PC-3 (cell line): ENCODE measurements at regions of chr13 and their contacts with region 1.

Region 1: GRCh38 chr13:24148399-24149305 is 11.9 kb upstream of the SPATA13 start:
- DNase-seq: peak; percentile 98
- ATAC-seq: peak; percentile 94
- H3K4me3 ChIP-seq: peak overlapping the region; percentile 28; the same call in 1 of the 2 replicates
- H3K27ac ChIP-seq: peak overlapping the region; percentile 99
- H3K4me1 ChIP-seq: peaks cover 37% of the 10 kb centered on the region
- H3K27me3 ChIP-seq: no peaks in the 10 kb centered on the region
- CTCF ChIP-seq: peak; percentile 51

Region 2: DNA sequence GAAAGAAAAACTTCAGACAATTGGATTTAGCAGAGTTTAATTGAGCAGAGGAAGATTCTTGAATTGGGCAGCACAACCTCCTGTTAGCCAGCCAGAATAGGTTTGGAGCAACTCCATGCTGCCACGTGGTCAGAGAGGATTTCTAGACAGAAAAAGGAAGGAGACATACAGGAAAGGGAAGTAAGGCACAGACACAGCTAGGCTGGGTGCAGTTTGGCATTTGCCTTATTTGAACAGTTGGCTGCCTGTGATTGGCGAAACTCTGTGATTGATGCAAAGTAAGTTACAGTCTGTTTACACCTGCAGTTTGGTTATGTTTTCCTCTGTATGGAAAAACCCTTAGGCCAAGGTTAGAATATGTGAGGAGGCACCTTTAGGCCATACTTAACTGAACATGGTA is 74.0 kb before region 1 on chr13:
- CTCF ChIA-PET with region 1: no interaction called
- POLR2A ChIA-PET with region 1: no interaction called
- intact Hi-C with region 1: loop called (anchors 1 kb)
- DNase-seq: peak; percentile 54
- ATAC-seq: peak; percentile 58
- H3K4me3 ChIP-seq: no peak overlapping the region
- H3K27ac ChIP-seq: peak overlapping the region; percentile 89
- H3K4me1 ChIP-seq: peaks cover 37% of the 10 kb centered on the region
- H3K27me3 ChIP-seq: no peaks in the 10 kb centered on the region
- CTCF ChIP-seq: no peak